ENCODE measurements at regions of chr1 and their contacts with region 1.

Region 1: GRCh38 chr1:8727809-8728213 is 89.6 kb downstream of the RERE start:
- DNase-seq: no peak
- ATAC-seq: no peak
- H3K4me3 ChIP-seq: no peak overlapping the region
- H3K27ac ChIP-seq: no peak overlapping the region
- H3K4me1 ChIP-seq: peaks cover 0 to 5% (median 1%) of the 10 kb centered on the region in 4 donors
- H3K27me3 ChIP-seq: no peaks in the 10 kb centered on the region
- CTCF ChIP-seq: no peak
- POLR2A ChIP-seq: no peak

Region 2: DNA sequence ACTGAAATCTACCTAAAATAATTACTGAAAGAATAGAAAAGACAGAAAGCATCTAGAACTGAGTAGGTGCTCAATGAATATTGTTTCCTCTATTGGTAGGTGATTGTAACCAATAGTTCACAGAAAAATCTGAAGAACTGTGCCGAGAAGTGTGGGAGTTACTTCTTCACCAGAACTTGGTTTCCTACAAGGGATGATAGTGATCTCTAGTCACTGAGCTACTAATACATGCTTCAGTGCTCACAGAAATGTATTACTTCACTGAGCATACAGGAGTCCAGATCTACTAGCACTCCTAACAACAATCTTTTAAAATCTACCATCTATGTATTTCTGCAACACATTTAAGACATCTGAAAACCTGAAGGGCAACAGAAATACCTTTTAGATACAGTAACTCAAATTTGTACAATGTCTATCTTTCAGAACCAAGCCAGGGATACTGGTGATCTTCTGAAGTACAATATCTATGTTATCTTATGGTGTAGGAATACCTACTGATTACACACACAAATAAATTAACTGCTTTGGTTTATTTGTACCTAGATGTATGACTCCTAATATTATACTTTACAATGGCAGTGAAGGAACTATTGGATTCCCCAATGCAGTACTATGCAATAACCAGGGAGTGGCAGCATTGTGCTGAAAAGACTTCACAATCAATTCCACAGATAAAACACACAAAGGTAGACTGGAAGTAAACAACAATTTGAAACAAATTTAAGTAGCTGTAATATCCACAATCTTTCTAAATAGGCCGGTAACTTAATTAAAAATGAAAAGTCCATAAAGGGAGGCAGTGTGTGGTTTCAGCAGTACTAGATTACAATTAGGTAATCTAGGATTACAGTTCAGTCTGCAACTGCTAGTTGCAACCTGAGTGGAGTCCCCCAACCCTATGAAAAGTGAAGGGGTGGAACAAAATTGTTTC is 166.9 kb before region 1 on chr1:
- intact Hi-C with region 1: loop called in 1 of 2 experiments (anchors 10 kb)
- DNase-seq: no peak
- ATAC-seq: peak; percentile 88 to 92 (median 91)
- H3K4me3 ChIP-seq: no peak overlapping the region
- H3K27ac ChIP-seq: no peak overlapping the region
- H3K4me1 ChIP-seq: peaks cover 0 to 28% (median 2%) of the 10 kb centered on the region in 4 donors
- H3K27me3 ChIP-seq: no peaks in the 10 kb centered on the region
- CTCF ChIP-seq: peak; percentile 92 to 98 (median 93)
- POLR2A ChIP-seq: no peak

Region 3: GRCh38 chr1:9473032-9473792 is 745.4 kb after region 1 on chr1:
- intact Hi-C with region 1: no loop called
- DNase-seq: no peak
- ATAC-seq: peak in 1 of 4 donors; percentile 12
- H3K4me3 ChIP-seq: no peak overlapping the region
- H3K27ac ChIP-seq: no peak overlapping the region
- H3K4me1 ChIP-seq: no peaks in the 10 kb centered on the region
- H3K27me3 ChIP-seq: no peaks in the 10 kb centered on the region
- CTCF ChIP-seq: no peak
- POLR2A ChIP-seq: no peak